Activated CD4-positive, alpha-beta memory T cell treated with anti-CD3 and anti-CD28 coated beads for 36 hours (primary cell): ENCODE measurements at regions of chr10 and their contacts with region 1.

Region 1: GRCh38 chr10:11986593-11987216 is 55.9 kb downstream of the UPF2 start:
- DNase-seq: peak; percentile 81
- H3K4me3 Mint-ChIP-seq: no peak overlapping the region
- H3K27ac Mint-ChIP-seq: no peak overlapping the region
- H3K4me1 Mint-ChIP-seq: peaks cover 4% of the 10 kb centered on the region
- H3K27me3 Mint-ChIP-seq: no peaks in the 10 kb centered on the region

Region 2: GRCh38 chr10:11819030-11819429 is 167.7 kb before region 1 on chr10:
- CTCF ChIA-PET with region 1: interaction called, 3 read pairs
- POLR2A ChIA-PET with region 1: no interaction called
- intact Hi-C with region 1: loop called (anchors 1 kb)
- DNase-seq: no peak
- H3K4me3 Mint-ChIP-seq: no peak overlapping the region
- H3K27ac Mint-ChIP-seq: no peak overlapping the region
- H3K4me1 Mint-ChIP-seq: peaks cover 6% of the 10 kb centered on the region
- H3K27me3 Mint-ChIP-seq: peaks cover 20% of the 10 kb centered on the region

Region 3: GRCh38 chr10:11975795-11976194 is 10.9 kb before region 1 on chr10:
- CTCF ChIA-PET with region 1: interaction called, 12 read pairs
- POLR2A ChIA-PET with region 1: no interaction called
- intact Hi-C with region 1: no loop called
- DNase-seq: no peak
- H3K4me3 Mint-ChIP-seq: no peak overlapping the region
- H3K27ac Mint-ChIP-seq: no peak overlapping the region
- H3K4me1 Mint-ChIP-seq: no peaks in the 10 kb centered on the region
- H3K27me3 Mint-ChIP-seq: no peaks in the 10 kb centered on the region

Region 4: DNA sequence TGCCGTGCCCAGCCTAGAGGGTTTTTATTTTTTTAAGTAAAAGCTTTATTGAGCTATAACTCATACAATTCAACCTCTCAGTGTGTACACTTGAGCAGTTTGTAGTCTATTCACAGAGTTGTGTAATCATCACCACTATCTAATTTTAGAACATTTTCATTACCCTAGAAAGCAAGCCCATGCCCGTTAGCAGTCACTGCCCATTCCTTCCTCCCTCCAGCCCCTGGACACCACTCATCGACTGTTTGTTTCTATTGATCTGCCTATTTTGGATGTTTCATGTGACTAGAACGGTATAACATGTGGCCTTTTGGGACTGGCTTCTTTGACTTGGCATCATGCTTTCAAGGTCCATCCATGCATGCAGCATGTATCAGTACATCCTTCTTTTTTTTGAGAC is 117.1 kb after region 1 on chr10:
- CTCF ChIA-PET with region 1: no interaction called
- POLR2A ChIA-PET with region 1: no interaction called
- intact Hi-C with region 1: no loop called
- DNase-seq: no peak
- H3K4me3 Mint-ChIP-seq: no peak overlapping the region
- H3K27ac Mint-ChIP-seq: no peak overlapping the region
- H3K4me1 Mint-ChIP-seq: no peaks in the 10 kb centered on the region
- H3K27me3 Mint-ChIP-seq: no peaks in the 10 kb centered on the region